Astrocyte of the cerebellum (primary cell): ENCODE measurements at regions of chr6 and their contacts with region 1.

Region 1: GRCh38 chr6:24689964-24690363 is 23.1 kb downstream of the ACOT13 start:
- DNase-seq: no peak
- H3K4me3 ChIP-seq: no peak overlapping the region
- CTCF ChIP-seq: no peak

Region 2: DNA sequence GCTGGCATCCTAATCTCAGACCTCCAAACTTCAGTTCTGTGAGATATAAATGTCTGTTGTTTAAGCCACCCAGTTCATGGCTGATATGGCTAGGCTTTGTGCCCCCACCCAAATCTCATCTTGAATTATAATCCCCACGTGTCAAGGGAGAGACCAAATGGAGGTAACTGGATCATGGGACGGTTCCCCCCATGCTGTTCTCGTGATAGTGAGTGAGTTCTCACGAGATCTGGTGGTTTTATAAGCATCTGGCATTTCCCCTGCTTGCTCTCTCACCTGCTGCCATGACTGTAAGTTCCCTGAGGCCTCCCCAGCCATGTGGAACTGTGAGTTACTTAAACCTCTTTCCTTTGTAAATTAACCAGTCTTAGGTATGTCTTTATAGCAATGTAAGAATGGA is 100.6 kb before region 1 on chr6:
- in situ Hi-C with region 1: loop called (anchors 5 kb)
- DNase-seq: no peak
- H3K4me3 ChIP-seq: no peak overlapping the region
- CTCF ChIP-seq: no peak

Region 3: GRCh38 chr6:25042036-25042521 is 352.1 kb after region 1 on chr6:
- in situ Hi-C with region 1: no loop called
- DNase-seq: no peak
- H3K4me3 ChIP-seq: no peak overlapping the region
- CTCF ChIP-seq: no peak